Dendritic cell treated with granulocyte-macrophage colony-stimulating factor and Interleukin-4, amounts not matched to agents 40 ng/mL and 50 ng/mL, for 4 days (primary cell): ENCODE measurements at regions of chr19 and their contacts with region 1.

Region 1: DNA sequence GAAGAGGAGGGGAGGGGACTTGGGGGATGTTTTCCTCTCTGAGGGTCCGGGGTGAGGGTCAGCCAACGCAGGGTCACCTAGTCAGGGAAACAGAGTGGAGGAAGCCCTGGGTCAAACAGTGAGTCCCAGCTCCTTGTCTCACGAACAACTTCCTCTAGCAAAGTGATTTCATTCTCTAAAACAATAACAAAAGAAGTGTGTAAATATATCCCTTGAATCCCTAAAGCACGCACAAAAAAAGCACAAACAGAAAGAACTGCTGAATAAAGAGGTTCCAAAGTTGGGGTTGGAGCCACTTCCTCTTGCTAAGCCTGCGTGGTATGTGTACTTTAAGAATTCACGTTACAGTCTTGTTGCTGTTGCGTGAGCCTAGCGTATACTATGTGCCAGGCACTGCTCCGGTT is 1.5 kb upstream of the C5AR2 start:
- H3K4me3 Mint-ChIP-seq: peak overlapping the region; percentile 51
- H3K27ac Mint-ChIP-seq: peak overlapping the region; percentile 87
- H3K4me1 Mint-ChIP-seq: peaks cover 62% of the 10 kb centered on the region
- H3K27me3 Mint-ChIP-seq: no peaks in the 10 kb centered on the region

Region 2: DNA sequence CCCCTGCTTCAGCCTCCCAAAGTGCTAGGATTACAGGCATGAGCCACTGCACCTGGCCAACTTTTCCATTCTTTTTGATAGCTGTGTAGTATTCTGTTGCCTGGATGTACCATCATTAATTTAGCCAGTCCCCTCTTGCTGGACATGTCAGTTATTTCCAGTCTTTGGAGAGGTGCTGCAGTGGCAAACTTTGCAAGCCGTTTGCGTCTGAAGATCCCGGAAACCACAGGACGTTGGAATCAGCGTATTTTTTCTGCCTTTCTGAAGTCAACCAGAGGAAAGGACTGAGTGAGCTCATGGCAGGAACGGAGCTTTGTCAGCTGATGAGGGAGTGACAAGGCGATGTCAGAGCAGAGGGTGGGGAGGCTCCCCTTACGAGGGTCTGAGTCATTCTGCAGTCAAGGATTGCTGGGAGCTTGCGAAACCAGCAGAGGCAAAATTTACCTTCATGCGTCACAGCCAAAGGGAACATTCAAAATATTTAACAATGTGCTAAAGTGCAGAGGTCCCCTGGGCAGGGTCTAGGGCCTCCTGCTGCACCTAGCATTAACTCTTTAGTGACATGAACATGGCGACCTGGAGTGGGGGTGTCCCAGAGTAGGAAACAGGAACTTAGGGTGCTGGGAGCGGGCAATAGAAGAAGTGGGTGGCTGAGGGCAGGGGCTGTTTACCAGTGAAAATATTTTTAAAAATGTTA is 15.2 kb before region 1 on chr19:
- intact Hi-C with region 1: loop called (anchors 2 kb)
- H3K4me3 Mint-ChIP-seq: peak overlapping the region; percentile 72
- H3K27ac Mint-ChIP-seq: peak overlapping the region; percentile 93
- H3K4me1 Mint-ChIP-seq: peaks cover 74% of the 10 kb centered on the region
- H3K27me3 Mint-ChIP-seq: no peaks in the 10 kb centered on the region

Region 3: DNA sequence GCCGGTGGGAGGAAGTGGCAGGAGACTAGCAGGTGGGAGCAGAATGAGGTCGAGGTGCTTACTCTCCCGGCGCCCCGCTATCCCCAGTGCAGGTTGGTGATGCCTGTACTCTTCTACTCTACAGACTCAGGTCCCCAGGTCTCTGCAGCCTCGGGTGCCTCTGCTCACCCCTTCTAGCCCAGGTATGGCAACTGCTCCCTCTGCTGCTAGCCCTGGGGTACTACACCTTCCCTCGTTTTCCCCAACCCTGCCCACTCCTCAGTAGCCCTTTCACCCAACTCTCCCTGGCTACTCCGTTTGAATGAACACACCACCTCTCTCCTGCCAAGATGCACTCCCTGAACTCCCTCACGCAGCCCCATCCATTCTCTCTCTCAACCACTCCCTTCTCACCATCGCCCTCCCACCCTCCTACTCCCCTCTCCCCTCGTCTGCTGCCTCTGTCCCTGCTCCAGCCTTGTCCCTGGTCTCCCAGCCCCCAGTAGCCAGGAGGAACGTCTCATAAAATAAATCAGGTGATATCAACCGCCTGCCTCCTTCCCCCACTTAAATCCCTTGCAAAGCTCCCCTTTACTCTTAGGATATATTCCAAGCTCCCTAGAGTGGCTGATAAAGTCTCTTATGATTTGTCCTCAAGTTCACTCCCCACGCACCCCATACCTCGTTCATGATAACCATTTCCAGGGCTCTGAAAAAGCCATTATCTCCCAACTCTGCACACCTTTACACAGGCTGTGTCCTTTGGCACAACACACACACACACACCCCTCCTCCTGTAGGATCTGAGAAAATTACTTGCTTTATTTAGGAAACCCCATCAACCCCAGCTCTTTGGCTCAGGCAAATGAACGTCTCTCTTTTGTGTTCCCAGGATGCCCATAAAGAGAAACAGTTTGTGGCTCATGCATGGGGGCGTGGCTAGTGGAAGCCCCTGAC is 97.0 kb after region 1 on chr19:
- intact Hi-C with region 1: no loop called
- H3K4me3 Mint-ChIP-seq: no peak overlapping the region
- H3K27ac Mint-ChIP-seq: no peak overlapping the region
- H3K4me1 Mint-ChIP-seq: peaks cover 20% of the 10 kb centered on the region
- H3K27me3 Mint-ChIP-seq: peaks cover 28% of the 10 kb centered on the region